ENCODE measurements at regions of chr19 and their contacts with region 1.

Region 1: DNA sequence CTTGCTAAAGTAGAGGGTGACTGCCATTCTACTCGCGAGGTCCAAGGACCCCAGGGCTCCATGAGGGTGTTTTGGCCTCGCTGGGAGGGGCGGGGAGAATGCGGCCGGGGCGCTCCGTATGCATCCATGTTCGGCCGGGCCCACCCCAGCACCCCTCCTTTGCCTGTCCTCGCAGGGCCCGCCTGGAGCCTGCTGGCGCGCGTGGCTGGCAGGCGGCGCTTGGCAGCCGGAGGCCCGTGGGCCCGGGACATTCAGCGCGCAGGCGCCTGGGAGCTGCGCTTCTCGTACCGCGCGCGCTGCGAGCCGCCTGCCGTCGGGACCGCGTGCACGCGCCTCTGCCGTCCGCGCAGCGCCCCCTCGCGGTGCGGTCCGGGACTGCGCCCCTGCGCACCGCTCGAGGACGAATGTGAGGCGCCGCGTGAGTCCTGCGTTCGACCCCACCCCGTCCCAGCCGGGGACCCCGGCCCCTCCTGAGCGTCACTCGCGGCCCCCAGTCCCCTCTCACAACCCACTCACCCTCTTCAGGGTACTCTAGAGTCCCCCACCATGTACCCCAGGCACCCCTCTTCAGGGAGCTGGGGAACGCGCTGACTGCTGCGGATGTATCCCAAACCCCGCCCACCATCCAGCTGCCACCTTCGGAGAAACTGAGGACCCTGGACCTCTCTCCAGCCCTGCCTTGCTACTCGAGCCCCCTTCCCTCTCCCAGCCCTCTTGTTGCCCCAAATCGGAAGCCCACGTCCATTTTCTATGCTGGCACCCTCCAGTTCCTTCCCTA is 4.1 kb downstream of the DLL3 start:
- DNase-seq: peak; percentile 72
- H3K4me3 Mint-ChIP-seq: no peak overlapping the region
- H3K27ac Mint-ChIP-seq: no peak overlapping the region
- H3K4me1 Mint-ChIP-seq: peaks cover 38% of the 10 kb centered on the region
- H3K27me3 Mint-ChIP-seq: peaks cover 68% of the 10 kb centered on the region

Region 2: DNA sequence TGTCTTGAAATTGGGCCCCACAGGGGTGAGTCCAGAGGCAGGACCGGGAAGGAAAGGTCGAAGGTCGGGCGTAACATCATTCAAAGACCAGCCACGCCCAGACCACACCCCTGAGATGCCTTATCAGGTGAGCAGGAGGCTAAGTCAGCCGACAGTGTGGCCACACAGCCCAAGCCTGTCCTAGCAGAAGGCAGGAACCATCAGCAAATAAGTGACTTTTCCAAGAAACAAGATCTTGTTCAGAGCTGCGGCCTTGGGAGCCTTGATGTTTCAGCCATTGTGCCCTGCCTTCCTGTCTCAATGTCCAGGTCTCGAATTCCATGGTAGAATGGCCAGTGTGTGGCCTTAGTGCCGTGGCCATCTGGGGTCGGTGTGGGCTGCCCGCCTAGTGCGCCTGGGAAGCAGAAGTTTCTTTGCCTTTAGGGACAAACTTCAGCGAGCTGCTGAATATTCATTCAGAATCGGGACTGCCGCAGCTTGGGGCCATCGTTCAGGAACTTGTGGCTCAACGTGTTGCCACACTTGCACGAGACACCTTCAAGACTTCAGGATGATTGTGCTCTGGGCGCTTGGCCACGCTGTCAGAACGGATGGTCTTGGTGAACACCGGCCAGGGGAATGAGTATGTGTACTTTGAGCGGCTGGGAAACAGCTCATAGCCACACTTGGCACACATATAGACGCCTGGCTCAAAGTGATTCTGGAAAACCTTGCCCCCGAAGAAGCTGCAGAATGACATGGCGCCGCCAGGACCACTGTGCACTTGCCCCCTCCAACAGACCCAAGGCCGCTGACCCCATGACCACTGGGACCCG is 248.1 kb before region 1 on chr19:
- CTCF ChIA-PET with region 1: no interaction called
- POLR2A ChIA-PET with region 1: no interaction called
- DNase-seq: no peak
- H3K4me3 Mint-ChIP-seq: no peak overlapping the region
- H3K27ac Mint-ChIP-seq: no peak overlapping the region
- H3K4me1 Mint-ChIP-seq: peaks cover 12% of the 10 kb centered on the region
- H3K27me3 Mint-ChIP-seq: peaks cover 2% of the 10 kb centered on the region

Region 3: GRCh38 chr19:39514840-39515550 is 12.2 kb after region 1 on chr19 and contains the start of gene SELENOV:
- CTCF ChIA-PET with region 1: interaction called, 11 read pairs
- POLR2A ChIA-PET with region 1: no interaction called
- DNase-seq: no peak
- H3K4me3 Mint-ChIP-seq: peak within 1 kb of the TSS; percentile 32
- H3K27ac Mint-ChIP-seq: no peak within 1 kb of the TSS
- H3K4me1 Mint-ChIP-seq: peaks cover 9% of the 10 kb centered on the region
- H3K27me3 Mint-ChIP-seq: peaks cover 57% of the 10 kb centered on the region
- total RNA-seq, gene SELENOV: not detected

Region 4: GRCh38 chr19:39532233-39533002 is 29.6 kb after region 1 on chr19 and contains the start of gene EID2B:
- CTCF ChIA-PET with region 1: interaction called, 10 read pairs
- POLR2A ChIA-PET with region 1: no interaction called
- DNase-seq: peak; percentile 96
- H3K4me3 Mint-ChIP-seq: peak within 1 kb of the TSS; percentile 90
- H3K27ac Mint-ChIP-seq: peak within 1 kb of the TSS; percentile 88
- H3K4me1 Mint-ChIP-seq: peaks cover 28% of the 10 kb centered on the region
- H3K27me3 Mint-ChIP-seq: no peaks in the 10 kb centered on the region
- total RNA-seq, gene EID2B: 3.4 to 5.1 TPM

Measured in activated CD4-positive, alpha-beta T cell treated with anti-CD3 and anti-CD28 coated beads, Interleukin-2, amount 10 ng/mL, durations not matched to agents 7 days and 5 days (primary cell).